GM13977 (cell line): ENCODE measurements at regions of chr1 and their contacts with region 1.

Region 1: DNA sequence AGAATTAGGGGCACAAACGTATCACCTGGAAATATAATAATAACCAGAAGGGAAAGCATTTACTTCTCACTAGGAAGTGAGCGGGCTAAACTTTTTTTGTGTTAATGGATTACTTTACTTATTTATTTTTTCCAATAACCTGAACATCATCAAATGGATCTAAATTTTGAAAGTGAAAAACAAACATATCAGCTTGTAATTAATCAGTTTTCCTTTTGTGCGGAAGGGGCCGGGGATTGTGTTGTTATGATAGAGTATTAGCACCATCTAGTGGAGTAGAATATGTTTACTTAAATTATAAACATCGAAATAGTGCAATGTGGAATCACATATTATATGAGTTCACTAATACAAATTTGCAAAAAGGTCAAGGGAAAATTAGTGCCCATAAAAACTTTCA is 9.0 kb downstream of the CFH start:
- DNase-seq: peak; percentile 21
- CTCF ChIP-seq: peak; percentile 49

Region 2: DNA sequence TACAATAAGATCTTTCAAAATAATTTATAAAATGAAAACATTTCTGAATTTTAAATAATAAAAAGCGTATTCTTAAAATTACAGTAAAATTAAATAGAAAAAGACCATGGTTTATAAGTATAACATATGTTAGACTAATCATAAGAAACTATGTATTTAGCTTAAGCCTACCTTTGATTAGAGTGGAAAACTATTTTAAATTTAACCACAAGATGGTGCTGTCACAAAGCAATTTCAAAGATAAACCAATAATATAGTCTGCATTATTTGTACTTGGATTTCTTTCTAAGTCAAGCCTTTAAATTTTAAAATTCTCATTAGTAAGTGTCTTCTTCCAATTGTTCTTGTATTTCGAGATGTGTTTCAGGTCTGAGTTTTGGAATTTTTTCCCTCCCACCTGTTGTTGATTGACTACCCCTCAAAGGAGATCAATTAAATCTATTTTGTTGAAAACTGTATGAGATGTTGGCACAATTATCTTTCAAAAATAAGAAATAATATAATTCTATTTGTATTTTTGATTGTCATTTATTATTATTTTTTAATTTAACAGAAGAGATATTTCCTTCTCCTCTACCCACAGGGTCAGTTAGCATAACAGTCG is 512.4 kb before region 1 on chr1:
- in situ Hi-C with region 1: loop called (anchors 25 kb)
- DNase-seq: peak; percentile 13
- CTCF ChIP-seq: peak; percentile 48

Region 3: DNA sequence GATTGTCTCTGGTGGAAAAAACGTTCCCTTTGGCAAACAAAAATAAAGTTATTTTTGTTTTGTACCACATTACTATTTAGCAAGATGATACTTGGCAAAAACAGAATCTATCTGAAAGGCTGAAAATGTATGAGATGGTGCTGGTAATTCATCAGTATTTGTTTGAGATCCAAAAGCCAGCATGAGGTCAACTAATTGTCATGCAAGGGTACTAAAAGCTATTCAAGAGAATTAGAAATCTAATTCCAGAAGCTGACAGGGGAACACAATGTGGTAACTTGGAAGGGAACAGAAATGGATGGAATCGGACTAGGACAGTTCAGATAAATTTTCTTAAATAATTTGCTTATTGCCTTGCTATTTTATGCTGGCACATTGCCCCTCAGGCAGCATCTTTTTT is 316.4 kb before region 1 on chr1:
- in situ Hi-C with region 1: loop called (anchors 25 kb)
- DNase-seq: no peak
- CTCF ChIP-seq: no peak

Region 4: GRCh38 chr1:196366817-196367495 is 293.9 kb before region 1 on chr1:
- in situ Hi-C with region 1: no loop called
- DNase-seq: no peak
- CTCF ChIP-seq: no peak

Region 5: DNA sequence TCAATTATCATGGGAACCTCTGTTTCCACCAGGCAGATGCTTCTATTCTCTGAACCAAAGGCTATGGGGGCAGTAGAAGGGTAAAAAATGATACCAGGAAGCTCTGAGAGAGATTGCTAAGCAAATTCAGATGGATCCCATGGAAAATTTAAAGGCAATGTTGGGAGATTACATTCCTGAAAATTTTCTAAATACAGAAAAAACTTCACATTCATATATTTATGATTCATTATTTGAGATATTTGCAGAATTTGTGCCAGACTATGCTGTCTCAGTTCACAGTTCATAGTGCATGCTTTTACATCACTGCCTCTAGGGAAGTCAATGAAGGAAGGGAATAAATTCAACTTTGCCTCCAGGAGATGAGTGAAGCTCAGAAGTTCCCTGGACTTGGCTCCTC is 110.1 kb before region 1 on chr1:
- in situ Hi-C with region 1: no loop called
- DNase-seq: no peak
- CTCF ChIP-seq: no peak